ENCODE measurements at regions of chr10 and their contacts with region 1.

Region 1: DNA sequence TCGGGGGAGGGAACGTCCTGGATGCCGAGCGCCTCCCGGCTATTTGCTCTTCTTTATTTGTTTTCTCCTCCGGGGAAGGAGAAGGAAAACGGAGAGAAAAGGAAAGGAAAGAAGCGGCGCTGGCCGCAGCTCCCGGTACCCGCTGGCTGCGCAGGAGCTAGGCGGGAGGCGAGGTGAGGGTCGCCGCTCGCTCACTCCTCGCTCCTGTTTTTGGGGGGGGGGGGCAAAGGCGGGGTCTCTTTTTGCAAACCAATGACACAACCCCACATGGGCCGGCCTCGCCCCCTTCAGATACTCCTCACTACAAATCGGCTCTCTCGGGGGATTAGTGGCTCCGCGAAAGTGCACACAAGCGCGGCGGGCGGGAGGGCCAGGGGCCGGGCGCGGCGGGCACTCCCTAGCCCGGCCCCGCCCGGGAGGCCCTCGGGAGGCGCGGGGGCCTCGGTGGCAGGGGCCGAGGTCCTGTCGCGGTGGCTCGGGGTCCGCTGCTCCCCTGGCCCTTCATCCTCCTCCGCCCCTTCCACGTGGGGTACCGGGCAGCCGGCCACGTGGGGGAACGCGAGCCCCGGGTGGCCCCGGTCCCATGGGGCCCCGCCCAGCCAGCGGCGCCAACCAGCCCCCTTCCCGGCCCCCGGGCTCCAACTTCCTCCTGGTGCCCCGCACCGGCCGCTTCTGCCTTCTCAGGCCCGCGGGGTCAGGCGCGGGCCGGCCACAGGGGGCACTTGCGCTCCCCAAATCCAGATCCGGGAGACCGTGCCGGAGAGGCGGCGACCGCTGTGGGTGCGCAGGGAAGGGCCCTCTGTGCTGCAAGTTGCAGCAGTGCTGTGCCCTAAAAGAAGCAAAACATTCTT is 718 bp upstream of the CTBP2 start:
- DNase-seq: peak; percentile 80
- H3K4me3 ChIP-seq: peak overlapping the region; percentile 64 to 86 (median 70)
- H3K27ac ChIP-seq: peak overlapping the region; percentile 80
- H3K4me1 ChIP-seq: peaks cover 20% of the 10 kb centered on the region
- H3K27me3 ChIP-seq: no peaks in the 10 kb centered on the region
- CTCF ChIP-seq: peak; percentile 16 to 64

Region 2: GRCh38 chr10:125263555-125263954 is 102.5 kb after region 1 on chr10:
- CTCF ChIA-PET with region 1: no interaction called
- dilution Hi-C with region 1: no loop called
- in situ Hi-C with region 1: no loop called
- intact Hi-C with region 1: loop called (anchors 1 kb)
- DNase-seq: peak; percentile 86
- H3K4me3 ChIP-seq: no peak overlapping the region
- H3K27ac ChIP-seq: peak overlapping the region; percentile 55
- H3K4me1 ChIP-seq: peaks cover 38% of the 10 kb centered on the region
- H3K27me3 ChIP-seq: no peaks in the 10 kb centered on the region
- CTCF ChIP-seq: no peak

Region 3: DNA sequence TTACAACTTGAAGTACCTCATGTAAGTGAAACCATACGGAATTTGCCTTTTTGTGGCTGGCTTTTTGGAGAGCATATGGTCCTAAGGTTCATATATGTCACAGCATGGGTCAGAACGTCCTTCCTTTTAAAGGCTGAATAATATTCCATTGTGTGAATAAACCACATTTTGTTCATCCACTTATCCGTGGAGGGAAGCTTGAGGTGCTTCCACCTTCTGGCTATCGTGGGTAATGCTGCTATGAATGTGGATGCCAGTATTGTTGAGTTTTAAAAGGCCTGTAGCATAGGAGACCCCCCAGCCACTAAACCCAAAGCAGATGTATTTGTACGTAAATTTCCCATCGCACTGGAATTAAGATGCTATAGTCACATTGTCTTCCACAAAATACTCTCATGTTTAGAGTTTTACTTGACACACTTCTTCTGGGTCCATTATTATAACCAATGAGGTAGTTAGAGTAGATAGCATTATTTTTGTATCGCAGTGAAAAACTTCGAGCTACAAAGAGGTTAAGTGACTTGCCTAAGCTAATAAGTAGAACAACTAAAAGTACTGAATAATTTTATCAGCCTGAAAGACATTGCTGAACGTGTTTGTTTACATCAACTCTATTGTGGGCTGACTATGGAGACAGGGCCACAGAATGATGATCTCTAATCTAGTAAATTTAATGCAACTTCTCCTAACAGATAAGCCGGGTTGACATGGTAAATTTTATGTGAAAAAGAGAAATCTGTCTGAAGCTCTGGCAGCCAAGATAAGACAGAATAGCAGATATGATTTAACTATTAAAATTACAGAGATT is 182.2 kb after region 1 on chr10:
- CTCF ChIA-PET with region 1: no interaction called
- dilution Hi-C with region 1: no loop called
- in situ Hi-C with region 1: no loop called
- intact Hi-C with region 1: loop called (anchors 1 kb)
- DNase-seq: peak; percentile 9
- H3K4me3 ChIP-seq: no peak overlapping the region
- H3K27ac ChIP-seq: no peak overlapping the region
- H3K4me1 ChIP-seq: no peaks in the 10 kb centered on the region
- H3K27me3 ChIP-seq: no peaks in the 10 kb centered on the region
- CTCF ChIP-seq: peak; percentile 60 to 62

Region 4: DNA sequence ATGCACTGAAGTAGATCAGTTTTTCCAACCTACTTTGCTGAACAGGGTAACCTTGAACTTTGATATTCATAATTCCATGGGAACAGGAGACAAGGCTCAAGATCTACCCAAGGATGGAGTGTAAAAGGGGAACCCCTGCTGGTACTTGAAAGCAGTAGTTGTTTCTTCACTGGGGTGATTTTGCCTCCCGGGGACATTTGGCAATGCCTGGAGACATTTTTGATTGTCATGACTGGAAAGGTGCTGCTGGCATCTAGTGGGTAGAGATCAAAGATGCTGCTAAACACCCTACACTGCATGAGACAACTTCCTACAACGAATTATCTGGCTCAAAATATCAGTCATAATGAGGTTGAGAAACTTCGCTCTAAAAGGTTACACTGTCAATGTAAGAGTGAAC is 214.1 kb after region 1 on chr10:
- CTCF ChIA-PET with region 1: no interaction called
- dilution Hi-C with region 1: no loop called
- in situ Hi-C with region 1: no loop called
- intact Hi-C with region 1: loop called (anchors 1 kb)
- DNase-seq: peak; percentile 46
- H3K4me3 ChIP-seq: no peak overlapping the region
- H3K27ac ChIP-seq: no peak overlapping the region
- H3K4me1 ChIP-seq: no peaks in the 10 kb centered on the region
- H3K27me3 ChIP-seq: no peaks in the 10 kb centered on the region
- CTCF ChIP-seq: peak; percentile 7 to 41

Region 5: GRCh38 chr10:125629763-125630376 is 468.8 kb after region 1 on chr10:
- CTCF ChIA-PET with region 1: no interaction called
- dilution Hi-C with region 1: no loop called
- in situ Hi-C with region 1: loop called in 1 of 2 experiments (anchors 25 kb)
- intact Hi-C with region 1: loop called (anchors 1 kb)
- DNase-seq: peak; percentile 46
- H3K4me3 ChIP-seq: no peak overlapping the region
- H3K27ac ChIP-seq: no peak overlapping the region
- H3K4me1 ChIP-seq: no peaks in the 10 kb centered on the region
- H3K27me3 ChIP-seq: no peaks in the 10 kb centered on the region
- CTCF ChIP-seq: peak; percentile 56 to 78

Measured in mammary epithelial cell (primary cell).